ENCODE measurements at regions of chr14 and their contacts with region 1.

Region 1: DNA sequence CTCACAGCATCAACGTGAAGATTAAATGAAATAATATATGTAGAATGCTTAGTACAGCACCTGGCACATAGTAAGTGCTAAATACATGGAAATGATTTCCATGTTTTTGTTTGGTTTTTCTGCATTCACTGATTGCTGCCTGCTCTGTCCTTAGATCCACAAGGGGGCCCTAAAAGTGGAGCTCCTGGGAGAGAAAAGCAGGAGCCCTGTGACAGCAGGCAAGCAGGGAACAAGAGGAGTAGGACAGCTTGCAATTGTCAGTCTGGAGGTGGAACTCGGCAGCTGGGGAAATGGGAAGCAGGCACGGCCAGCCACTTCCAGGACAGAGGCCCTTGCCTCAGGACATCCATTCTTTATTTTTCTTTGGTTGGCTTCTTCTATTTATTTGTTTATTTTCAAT is 292.9 kb downstream of the BMP4 start:
- DNase-seq: peak; percentile 55
- ATAC-seq: peak; percentile 84

Region 2: GRCh38 chr14:53807542-53807941 is 143.8 kb after region 1 on chr14:
- intact Hi-C with region 1: loop called (anchors 10 kb)
- DNase-seq: peak; percentile 62
- ATAC-seq: peak; percentile 95